Right cardiac atrium (tissue), 5 donors: ENCODE measurements at regions of chr7 and their contacts with region 1.

Region 1: DNA sequence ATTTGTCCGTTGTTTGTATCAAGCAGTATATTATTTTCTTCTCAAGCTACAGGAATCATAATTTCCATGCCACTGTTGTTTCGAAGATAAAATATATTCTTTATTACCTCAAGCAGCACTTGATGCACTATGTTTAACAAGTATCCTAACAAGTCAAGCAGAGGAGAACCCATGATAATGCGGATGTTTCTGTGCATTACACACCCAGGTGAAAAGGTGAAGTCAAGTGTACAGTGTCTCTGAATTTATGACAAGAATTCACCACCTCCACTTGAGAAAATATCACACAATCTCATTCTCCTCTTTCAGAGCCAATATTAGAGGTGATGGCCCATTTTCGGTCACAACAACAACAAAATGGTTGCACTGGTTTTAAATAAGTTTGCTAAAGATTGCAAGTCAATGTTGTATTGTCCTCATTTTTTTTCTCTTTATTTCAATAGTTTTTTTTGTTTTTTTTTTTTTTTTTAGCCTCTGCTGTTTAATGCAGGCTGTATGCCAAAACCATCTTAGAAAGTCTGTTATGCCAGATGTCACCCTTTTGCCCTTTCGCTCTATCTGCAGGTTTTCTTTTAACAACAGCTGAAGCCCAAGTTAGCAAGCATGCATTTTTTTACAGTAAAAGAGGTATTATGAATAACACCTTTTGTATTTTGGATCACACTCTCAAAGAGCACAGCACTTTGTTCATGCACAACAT is 568.7 kb upstream of the LRRN3 start:
- DNase-seq: no peak
- ATAC-seq: peak in 1 of 2 donors; percentile 28
- H3K4me3 ChIP-seq: no peak overlapping the region
- H3K27ac ChIP-seq: no peak overlapping the region
- H3K4me1 ChIP-seq: no peaks in the 10 kb centered on the region
- H3K27me3 ChIP-seq: no peaks in the 10 kb centered on the region

Region 2: DNA sequence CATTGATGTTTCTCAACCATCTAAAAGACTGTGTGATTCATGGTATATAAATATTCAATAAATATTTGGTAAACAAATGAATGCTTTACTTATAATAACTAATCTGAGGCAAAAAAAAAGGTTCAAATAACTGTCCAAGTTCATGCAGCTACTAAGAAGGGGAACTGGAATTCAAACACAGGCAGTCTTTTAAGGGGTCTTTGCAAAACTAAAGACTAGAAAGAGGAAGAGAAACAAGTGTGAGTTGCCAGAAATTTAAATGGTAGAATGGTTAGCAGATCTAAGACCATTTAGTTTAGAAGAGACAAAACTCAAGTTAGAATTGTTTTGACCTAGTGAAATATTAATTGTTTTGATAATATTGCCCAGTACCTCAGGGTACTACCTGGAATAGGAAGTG is 73.3 kb before region 1 on chr7:
- intact Hi-C with region 1: loop called in 1 of 4 experiments (anchors 2 kb)
- DNase-seq: no peak
- ATAC-seq: no peak
- H3K4me3 ChIP-seq: no peak overlapping the region
- H3K27ac ChIP-seq: no peak overlapping the region
- H3K4me1 ChIP-seq: no peaks in the 10 kb centered on the region
- H3K27me3 ChIP-seq: no peaks in the 10 kb centered on the region